Activated CD4-positive, alpha-beta memory T cell treated with anti-CD3 and anti-CD28 coated beads for 36 hours (primary cell): ENCODE measurements at regions of chr21 and their contacts with region 1.

Region 1: GRCh38 chr21:45554477-45555175 is 12.4 kb upstream of the SLC19A1 start:
- DNase-seq: peak; percentile 87
- H3K4me3 Mint-ChIP-seq: peak overlapping the region; percentile 88
- H3K27ac Mint-ChIP-seq: peak overlapping the region; percentile 79
- H3K4me1 Mint-ChIP-seq: peaks cover 30% of the 10 kb centered on the region
- H3K27me3 Mint-ChIP-seq: peaks cover 5% of the 10 kb centered on the region

Region 2: GRCh38 chr21:45228171-45228641 is 326.4 kb before region 1 on chr21:
- CTCF ChIA-PET with region 1: no interaction called
- POLR2A ChIA-PET with region 1: no interaction called
- intact Hi-C with region 1: loop called (anchors 5 kb)
- DNase-seq: peak; percentile 90
- H3K4me3 Mint-ChIP-seq: peak overlapping the region; percentile 23
- H3K27ac Mint-ChIP-seq: peak overlapping the region; percentile 66
- H3K4me1 Mint-ChIP-seq: peaks cover 48% of the 10 kb centered on the region
- H3K27me3 Mint-ChIP-seq: peaks cover 7% of the 10 kb centered on the region

Region 3: DNA sequence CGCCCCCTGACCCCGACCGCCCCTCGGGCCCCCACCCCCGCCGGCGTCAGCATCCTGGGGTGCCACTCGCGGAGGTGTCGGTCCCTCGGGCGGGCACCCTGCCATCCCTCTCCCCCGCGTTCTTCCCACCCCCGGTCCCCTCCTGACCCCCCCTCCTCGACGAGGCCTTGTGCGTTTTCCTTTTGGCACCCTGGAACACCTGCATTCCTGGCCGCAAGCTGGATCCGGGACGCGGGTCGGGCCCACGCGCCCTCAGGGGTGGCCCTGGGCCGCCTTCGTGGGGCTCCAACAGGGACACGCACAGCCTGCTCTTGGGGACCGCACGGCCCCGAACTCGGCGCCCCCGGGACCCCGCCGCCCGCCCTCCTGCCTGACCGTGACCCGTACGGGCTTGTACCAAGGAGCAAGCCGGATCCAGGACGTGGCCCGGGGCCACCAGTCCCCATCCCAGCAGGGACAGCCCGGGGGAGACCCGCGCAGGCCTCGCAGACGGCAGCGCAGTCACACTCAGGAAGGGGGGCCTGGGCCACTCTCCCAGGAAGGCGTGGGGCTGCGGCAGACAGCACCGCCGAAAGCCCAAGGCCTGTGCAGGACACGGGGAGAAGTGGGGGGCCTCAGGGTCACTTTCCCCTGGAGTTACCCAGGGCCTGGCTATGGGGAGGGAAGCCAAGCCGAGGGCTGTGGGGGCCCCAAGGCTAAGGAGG is 11.8 kb before region 1 on chr21:
- CTCF ChIA-PET with region 1: no interaction called
- POLR2A ChIA-PET with region 1: interaction called, 3 read pairs
- intact Hi-C with region 1: loop called (anchors 1 kb)
- DNase-seq: peak; percentile 12
- H3K4me3 Mint-ChIP-seq: peak overlapping the region; percentile 48
- H3K27ac Mint-ChIP-seq: no peak overlapping the region
- H3K4me1 Mint-ChIP-seq: peaks cover 23% of the 10 kb centered on the region
- H3K27me3 Mint-ChIP-seq: no peaks in the 10 kb centered on the region

Region 4: GRCh38 chr21:45596704-45597318 is 42.2 kb after region 1 on chr21:
- CTCF ChIA-PET with region 1: interaction called, 8 read pairs
- POLR2A ChIA-PET with region 1: interaction called, 12 read pairs
- intact Hi-C with region 1: loop called (anchors 1 kb)
- DNase-seq: peak; percentile 88
- H3K4me3 Mint-ChIP-seq: no peak overlapping the region
- H3K27ac Mint-ChIP-seq: peak overlapping the region; percentile 26
- H3K4me1 Mint-ChIP-seq: peaks cover 11% of the 10 kb centered on the region
- H3K27me3 Mint-ChIP-seq: no peaks in the 10 kb centered on the region

Region 5: DNA sequence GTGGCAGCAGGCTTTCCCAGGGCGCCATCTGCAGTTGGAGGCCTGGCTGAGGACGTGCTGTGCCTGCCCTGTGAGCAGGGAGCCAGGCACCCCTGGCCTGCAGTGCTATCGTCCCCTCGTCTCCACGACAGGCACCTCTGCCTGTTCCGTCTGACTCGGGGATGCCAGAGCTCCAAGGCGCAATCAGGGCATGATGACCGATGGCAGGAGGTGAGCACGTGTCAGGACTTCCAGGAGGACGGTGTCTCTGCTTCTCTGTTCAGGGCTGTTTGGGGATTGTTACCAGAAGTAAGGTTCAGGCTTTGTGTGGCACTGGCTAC is 214.1 kb after region 1 on chr21:
- CTCF ChIA-PET with region 1: no interaction called
- POLR2A ChIA-PET with region 1: interaction called, 3 read pairs
- intact Hi-C with region 1: loop called (anchors 2 kb)
- DNase-seq: peak; percentile 48
- H3K4me3 Mint-ChIP-seq: peak overlapping the region; percentile 31
- H3K27ac Mint-ChIP-seq: peak overlapping the region; percentile 87
- H3K4me1 Mint-ChIP-seq: peaks cover 41% of the 10 kb centered on the region
- H3K27me3 Mint-ChIP-seq: no peaks in the 10 kb centered on the region